SK-N-SH (cell line): ENCODE measurements at regions of chr14 and their contacts with region 1.

Region 1: GRCh38 chr14:59055439-59056045 is 132.9 kb upstream of the DAAM1 start:
- DNase-seq: peak; percentile 65
- H3K4me3 ChIP-seq: no peak overlapping the region
- H3K27ac ChIP-seq: no peak overlapping the region
- H3K4me1 ChIP-seq: no peaks in the 10 kb centered on the region
- H3K27me3 ChIP-seq: no peaks in the 10 kb centered on the region
- CTCF ChIP-seq: peak; percentile 88
- EP300 ChIP-seq: no peak
- RAD21 ChIP-seq: peak; percentile 84

Region 2: GRCh38 chr14:59067127-59067894 is 11.8 kb after region 1 on chr14:
- CTCF ChIA-PET with region 1: interaction called, 10 read pairs
- POLR2A ChIA-PET with region 1: no interaction called
- DNase-seq: no peak
- H3K4me3 ChIP-seq: no peak overlapping the region
- H3K27ac ChIP-seq: no peak overlapping the region
- H3K4me1 ChIP-seq: peaks cover 0 to 2% of the 10 kb centered on the region in 2 experiments; a peak in 1 of 4 replicates
- H3K27me3 ChIP-seq: no peaks in the 10 kb centered on the region
- CTCF ChIP-seq: no peak
- EP300 ChIP-seq: no peak
- RAD21 ChIP-seq: no peak